Mammary epithelial cell (primary cell): ENCODE measurements at regions of chr19 and their contacts with region 1.

Region 1: GRCh38 chr19:50768277-50768676 is 2.0 kb upstream of the GPR32 start:
- DNase-seq: no peak
- H3K4me3 ChIP-seq: no peak overlapping the region
- H3K27ac ChIP-seq: no peak overlapping the region
- H3K4me1 ChIP-seq: no peaks in the 10 kb centered on the region
- H3K27me3 ChIP-seq: no peaks in the 10 kb centered on the region
- CTCF ChIP-seq: no peak

Region 2: DNA sequence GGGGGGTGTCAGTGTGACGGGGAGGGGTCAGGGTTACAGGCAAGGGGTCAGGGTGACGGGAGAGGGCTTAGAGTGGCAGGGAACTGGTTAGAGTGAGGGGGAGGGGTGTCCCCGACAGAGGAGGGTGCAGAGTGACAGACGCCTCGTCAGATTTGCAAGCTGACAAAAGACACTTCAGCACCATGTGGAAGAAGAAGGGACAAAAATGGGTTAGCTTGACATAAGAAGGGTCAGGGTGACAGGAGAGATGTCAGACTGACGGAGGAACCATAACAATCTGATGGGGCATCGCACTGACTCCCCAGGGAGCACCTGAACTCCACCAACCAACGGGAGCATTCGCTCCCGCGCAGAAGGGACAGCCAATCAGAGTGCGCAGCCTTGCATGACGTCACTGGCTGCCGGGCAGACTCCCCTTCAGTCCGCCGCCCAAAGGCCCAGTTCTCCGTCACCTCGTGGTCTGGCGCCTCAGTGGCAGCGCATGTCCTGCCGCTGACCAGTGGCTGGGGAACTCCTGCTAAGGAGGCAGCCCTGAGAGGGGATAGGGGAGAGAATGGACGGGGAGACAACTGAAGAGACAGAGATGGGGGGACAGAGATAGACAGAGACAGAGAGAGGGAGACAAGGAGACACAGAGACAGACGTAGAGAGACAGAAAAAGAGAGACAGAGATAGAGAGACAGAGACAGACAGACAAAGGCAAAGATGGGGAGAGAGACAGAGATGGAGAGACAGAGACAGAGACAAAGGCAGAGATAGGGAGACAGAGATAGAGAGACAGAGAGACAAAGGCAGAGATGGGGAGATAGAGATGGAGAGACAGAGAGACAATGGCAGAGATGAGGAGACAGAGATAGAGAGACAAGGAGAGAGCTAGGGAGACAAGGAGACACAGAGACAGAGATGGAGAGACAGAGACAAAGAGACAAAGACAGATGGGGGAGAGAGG is 88.8 kb before region 1 on chr19:
- CTCF ChIA-PET with region 1: no interaction called
- dilution Hi-C with region 1: loop called (anchors 5 kb)
- in situ Hi-C with region 1: no loop called
- intact Hi-C with region 1: no loop called
- DNase-seq: peak; percentile 64
- H3K4me3 ChIP-seq: no peak overlapping the region
- H3K27ac ChIP-seq: no peak overlapping the region
- H3K4me1 ChIP-seq: no peaks in the 10 kb centered on the region
- H3K27me3 ChIP-seq: no peaks in the 10 kb centered on the region
- CTCF ChIP-seq: no peak

Region 3: DNA sequence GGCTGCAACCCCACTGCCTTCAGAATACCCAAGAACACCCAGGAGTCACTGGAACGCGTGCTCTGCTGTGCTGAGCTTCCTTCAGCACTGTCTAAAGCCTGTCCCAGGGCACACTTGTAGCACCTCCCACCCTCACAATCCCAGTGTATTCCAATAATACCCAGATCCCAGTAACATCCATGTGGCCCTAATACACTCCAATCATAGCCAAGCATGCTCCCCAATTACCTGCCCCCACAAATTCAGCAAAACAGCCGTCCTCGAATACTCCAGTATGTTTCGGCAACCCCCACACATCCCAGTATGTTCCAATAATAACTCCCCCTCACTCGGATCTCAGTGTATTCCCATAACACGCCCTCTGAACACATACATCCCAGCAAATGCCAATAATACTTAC is 77.8 kb before region 1 on chr19:
- CTCF ChIA-PET with region 1: no interaction called
- dilution Hi-C with region 1: no loop called
- in situ Hi-C with region 1: no loop called
- intact Hi-C with region 1: no loop called
- DNase-seq: no peak
- H3K4me3 ChIP-seq: no peak overlapping the region
- H3K27ac ChIP-seq: no peak overlapping the region
- H3K4me1 ChIP-seq: no peaks in the 10 kb centered on the region
- H3K27me3 ChIP-seq: peaks cover 7% of the 10 kb centered on the region
- CTCF ChIP-seq: no peak

Region 4: GRCh38 chr19:50705422-50706019 is 62.8 kb before region 1 on chr19:
- CTCF ChIA-PET with region 1: no interaction called
- dilution Hi-C with region 1: loop called (anchors 5 kb)
- in situ Hi-C with region 1: no loop called
- intact Hi-C with region 1: no loop called
- DNase-seq: peak; percentile 50
- H3K4me3 ChIP-seq: no peak overlapping the region
- H3K27ac ChIP-seq: no peak overlapping the region
- H3K4me1 ChIP-seq: no peaks in the 10 kb centered on the region
- H3K27me3 ChIP-seq: peaks cover 3% of the 10 kb centered on the region
- CTCF ChIP-seq: peak; percentile 68 to 84

Region 5: GRCh38 chr19:50728084-50728737 is 40.1 kb before region 1 on chr19:
- CTCF ChIA-PET with region 1: no interaction called
- dilution Hi-C with region 1: no loop called
- in situ Hi-C with region 1: no loop called
- intact Hi-C with region 1: no loop called
- DNase-seq: peak; percentile 47
- H3K4me3 ChIP-seq: no peak overlapping the region
- H3K27ac ChIP-seq: no peak overlapping the region
- H3K4me1 ChIP-seq: peaks cover 22% of the 10 kb centered on the region
- H3K27me3 ChIP-seq: no peaks in the 10 kb centered on the region
- CTCF ChIP-seq: no peak

Region 6: GRCh38 chr19:50739914-50740426 is 28.3 kb before region 1 on chr19:
- CTCF ChIA-PET with region 1: no interaction called
- dilution Hi-C with region 1: no loop called
- in situ Hi-C with region 1: no loop called
- intact Hi-C with region 1: no loop called
- DNase-seq: no peak
- H3K4me3 ChIP-seq: no peak overlapping the region
- H3K27ac ChIP-seq: no peak overlapping the region
- H3K4me1 ChIP-seq: no peaks in the 10 kb centered on the region
- H3K27me3 ChIP-seq: no peaks in the 10 kb centered on the region
- CTCF ChIP-seq: no peak

Region 7: GRCh38 chr19:50820549-50821247 is 52.4 kb after region 1 on chr19:
- CTCF ChIA-PET with region 1: no interaction called
- dilution Hi-C with region 1: no loop called
- in situ Hi-C with region 1: no loop called
- intact Hi-C with region 1: no loop called
- DNase-seq: no peak
- H3K4me3 ChIP-seq: no peak overlapping the region
- H3K27ac ChIP-seq: no peak overlapping the region
- H3K4me1 ChIP-seq: peaks cover 17% of the 10 kb centered on the region
- H3K27me3 ChIP-seq: no peaks in the 10 kb centered on the region
- CTCF ChIP-seq: no peak